Panc1 (cell line): ENCODE measurements at regions of chr5 and their contacts with region 1.

Region 1: GRCh38 chr5:138386290-138386689 is 33.8 kb downstream of the KDM3B start:
- DNase-seq: no peak
- ATAC-seq: no peak
- H3K4me3 ChIP-seq: no peak overlapping the region
- H3K27ac ChIP-seq: no peak overlapping the region
- H3K4me1 ChIP-seq: no peaks in the 10 kb centered on the region
- H3K27me3 ChIP-seq: no peaks in the 10 kb centered on the region
- CTCF ChIP-seq: no peak

Region 2: DNA sequence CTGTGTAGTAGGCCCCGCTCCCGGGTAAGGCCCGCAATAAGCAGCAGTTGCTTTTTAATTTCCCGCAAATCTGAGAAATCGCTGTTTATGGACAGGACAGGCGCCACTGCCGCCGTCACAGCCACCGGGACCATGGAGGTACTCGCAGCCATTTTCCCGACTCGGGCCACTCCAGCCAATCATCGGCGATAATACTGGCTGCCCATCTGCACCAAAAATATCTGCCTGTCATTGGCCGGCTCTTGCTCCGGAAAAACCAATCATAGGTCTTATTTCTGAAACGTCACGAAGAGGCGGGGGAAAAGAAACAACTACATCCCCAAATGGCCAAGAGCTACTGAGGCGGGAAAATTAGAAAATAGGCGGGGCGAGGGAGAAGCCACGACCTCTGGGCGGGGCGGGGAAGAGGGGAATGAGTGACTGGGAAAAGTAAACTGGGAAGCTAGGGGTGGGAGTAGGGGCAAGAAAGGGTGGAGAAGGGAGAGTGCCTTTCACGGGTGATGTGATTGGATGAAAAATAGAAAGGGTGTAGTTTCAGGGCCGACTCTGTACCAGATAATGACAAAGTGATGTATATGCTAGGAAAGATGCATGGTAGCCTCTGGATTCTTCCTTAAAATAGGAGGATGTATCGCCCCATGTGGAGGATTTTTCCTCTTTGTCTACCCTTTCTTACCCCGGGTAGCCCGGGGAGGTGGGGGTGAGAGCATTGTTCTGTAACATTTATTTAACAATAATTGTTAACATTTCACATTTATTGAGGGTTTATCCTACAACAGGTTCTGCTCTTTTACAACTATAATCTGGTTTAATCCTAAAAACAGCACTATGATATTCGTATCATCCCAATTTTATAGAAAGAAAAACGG is 172.9 kb before region 1 on chr5 and contains the start of gene CDC23:
- CTCF ChIA-PET with region 1: no interaction called
- POLR2A ChIA-PET with region 1: no interaction called
- in situ Hi-C with region 1: no loop called
- intact Hi-C with region 1: no loop called
- DNase-seq: peak; percentile 98
- ATAC-seq: peak; percentile 98
- H3K4me3 ChIP-seq: peak within 1 kb of the TSS; percentile 94 to 98
- H3K27ac ChIP-seq: peak within 1 kb of the TSS; percentile 91
- H3K4me1 ChIP-seq: peaks cover 13% of the 10 kb centered on the region
- H3K27me3 ChIP-seq: no peaks in the 10 kb centered on the region
- CTCF ChIP-seq: no peak
- total RNA-seq, gene CDC23: 44.7 TPM

Region 3: GRCh38 chr5:138371454-138371853 is 14.8 kb before region 1 on chr5:
- CTCF ChIA-PET with region 1: no interaction called
- POLR2A ChIA-PET with region 1: interaction called, 13 read pairs
- in situ Hi-C with region 1: no loop called
- intact Hi-C with region 1: no loop called
- DNase-seq: no peak
- ATAC-seq: no peak
- H3K4me3 ChIP-seq: no peak overlapping the region
- H3K27ac ChIP-seq: no peak overlapping the region
- H3K4me1 ChIP-seq: peaks cover 4% of the 10 kb centered on the region; the same call in 1 of the 2 replicates
- H3K27me3 ChIP-seq: no peaks in the 10 kb centered on the region
- CTCF ChIP-seq: no peak

Region 4: GRCh38 chr5:138402640-138403039 is 16.4 kb after region 1 on chr5:
- CTCF ChIA-PET with region 1: no interaction called
- POLR2A ChIA-PET with region 1: no interaction called
- in situ Hi-C with region 1: no loop called
- intact Hi-C with region 1: no loop called
- DNase-seq: no peak
- ATAC-seq: no peak
- H3K4me3 ChIP-seq: no peak overlapping the region
- H3K27ac ChIP-seq: no peak overlapping the region
- H3K4me1 ChIP-seq: no peaks in the 10 kb centered on the region
- H3K27me3 ChIP-seq: no peaks in the 10 kb centered on the region
- CTCF ChIP-seq: no peak